ENCODE measurements at regions of chr7 and their contacts with region 1.

Region 1: DNA sequence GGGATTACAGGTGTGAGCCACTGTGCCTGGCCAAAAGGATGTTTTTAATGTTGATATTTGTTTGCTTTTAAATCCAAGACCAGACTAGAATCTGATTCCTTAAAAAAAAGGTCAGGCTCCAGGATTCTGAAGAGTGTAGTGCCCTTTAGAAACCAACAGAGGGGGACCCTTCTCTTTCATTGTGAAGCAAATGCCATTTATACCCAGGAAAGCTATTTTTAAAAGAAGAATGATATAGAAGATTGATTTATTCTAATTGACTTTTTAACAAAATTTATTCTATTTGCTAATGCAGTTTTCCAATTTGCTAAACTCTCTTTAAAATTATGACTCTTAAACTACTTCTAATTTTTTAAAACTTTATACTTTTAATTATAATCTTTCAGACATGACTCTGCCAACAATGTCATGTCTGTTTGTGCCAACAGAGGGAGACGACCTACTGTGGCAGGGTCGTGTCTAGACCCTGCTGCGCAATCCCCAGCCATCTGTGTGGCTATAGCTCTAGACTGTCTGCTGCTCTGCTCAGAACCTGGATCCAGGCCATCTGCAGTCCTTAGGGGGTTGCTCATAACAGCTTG is 201.0 kb upstream of the IMMP2L start:
- DNase-seq: peak; percentile 11
- ATAC-seq: no peak
- H3K4me3 Mint-ChIP-seq: no peak overlapping the region
- H3K27ac Mint-ChIP-seq: no peak overlapping the region
- H3K4me1 Mint-ChIP-seq: no peaks in the 10 kb centered on the region
- H3K27me3 Mint-ChIP-seq: no peaks in the 10 kb centered on the region

Region 2: GRCh38 chr7:110693344-110693743 is 1070.0 kb before region 1 on chr7:
- CTCF ChIA-PET with region 1: no interaction called
- POLR2A ChIA-PET with region 1: no interaction called
- intact Hi-C with region 1: no loop called
- DNase-seq: no peak
- ATAC-seq: no peak
- H3K4me3 Mint-ChIP-seq: no peak overlapping the region
- H3K27ac Mint-ChIP-seq: no peak overlapping the region
- H3K4me1 Mint-ChIP-seq: no peaks in the 10 kb centered on the region
- H3K27me3 Mint-ChIP-seq: no peaks in the 10 kb centered on the region

Region 3: GRCh38 chr7:111605246-111605645 is 158.1 kb before region 1 on chr7:
- CTCF ChIA-PET with region 1: no interaction called
- POLR2A ChIA-PET with region 1: no interaction called
- intact Hi-C with region 1: no loop called
- DNase-seq: no peak
- ATAC-seq: no peak
- H3K4me3 Mint-ChIP-seq: no peak overlapping the region
- H3K27ac Mint-ChIP-seq: no peak overlapping the region
- H3K4me1 Mint-ChIP-seq: no peaks in the 10 kb centered on the region
- H3K27me3 Mint-ChIP-seq: peaks cover 5% of the 10 kb centered on the region

Region 4: GRCh38 chr7:112290065-112290464 is 526.8 kb after region 1 on chr7:
- CTCF ChIA-PET with region 1: no interaction called
- POLR2A ChIA-PET with region 1: no interaction called
- intact Hi-C with region 1: loop called in 1 of 2 experiments (anchors 10 kb)
- DNase-seq: no peak
- ATAC-seq: no peak
- H3K4me3 Mint-ChIP-seq: no peak overlapping the region
- H3K27ac Mint-ChIP-seq: no peak overlapping the region
- H3K4me1 Mint-ChIP-seq: peaks cover 7% of the 10 kb centered on the region
- H3K27me3 Mint-ChIP-seq: no peaks in the 10 kb centered on the region